ENCODE measurements at regions of chrX and their contacts with region 1.

Region 1: DNA sequence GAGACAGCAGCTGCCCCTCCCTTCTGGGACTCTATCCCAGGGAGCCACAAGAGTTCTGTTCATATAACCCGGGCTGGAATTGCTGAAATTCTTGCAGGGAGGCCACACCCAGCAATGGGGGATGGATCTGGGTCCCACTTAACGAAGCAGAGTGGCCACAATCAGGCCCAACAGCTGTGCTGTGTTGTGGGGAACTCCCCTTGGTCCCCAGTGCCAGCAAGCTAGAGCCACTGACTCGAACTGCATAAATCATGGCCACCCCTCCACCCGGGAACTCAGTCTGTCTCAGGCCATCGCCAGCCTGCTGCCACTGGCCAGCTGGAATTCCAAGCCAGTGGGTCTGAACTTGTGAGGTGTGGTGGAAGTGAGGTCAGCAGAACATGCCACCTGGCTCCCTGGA is 111.1 kb downstream of the KLF8 start:
- DNase-seq: no peak
- ATAC-seq: no peak
- H3K4me3 ChIP-seq: no peak overlapping the region
- H3K4me3 Mint-ChIP-seq: peak overlapping the region in 5 of 10 donors; percentile 57 to 75 (median 67)
- H3K27ac ChIP-seq: peak overlapping the region; percentile 21
- H3K27ac Mint-ChIP-seq: peak overlapping the region in 4 of 9 donors; percentile 66 to 91 (median 83)
- H3K4me1 ChIP-seq: peaks cover 6 to 21% of the 10 kb centered on the region in 2 donors
- H3K4me1 Mint-ChIP-seq: peaks cover 29 to 63% (median 56%) of the 10 kb centered on the region in 7 donors
- H3K27me3 ChIP-seq: no peaks in the 10 kb centered on the region
- H3K27me3 Mint-ChIP-seq: no peaks in the 10 kb centered on the region

Region 2: GRCh38 chrX:56314334-56314733 is 28.9 kb before region 1 on chrX:
- CTCF ChIA-PET with region 1: no interaction called
- POLR2A ChIA-PET with region 1: no interaction called
- intact Hi-C with region 1: loop called in 1 of 2 experiments (anchors 1 kb)
- DNase-seq: peak in 5 of 9 donors; percentile 0 to 32 (median 11)
- ATAC-seq: no peak
- H3K4me3 ChIP-seq: no peak overlapping the region
- H3K4me3 Mint-ChIP-seq: peak overlapping the region in 8 of 10 donors; percentile 46 to 79 (median 68)
- H3K27ac ChIP-seq: no peak overlapping the region
- H3K27ac Mint-ChIP-seq: peak overlapping the region in 7 of 9 donors; percentile 5 to 88 (median 59)
- H3K4me1 ChIP-seq: no peaks in the 10 kb centered on the region
- H3K4me1 Mint-ChIP-seq: peaks cover 0 to 15% (median 11%) of the 10 kb centered on the region in 7 donors
- H3K27me3 ChIP-seq: no peaks in the 10 kb centered on the region
- H3K27me3 Mint-ChIP-seq: no peaks in the 10 kb centered on the region

Region 3: DNA sequence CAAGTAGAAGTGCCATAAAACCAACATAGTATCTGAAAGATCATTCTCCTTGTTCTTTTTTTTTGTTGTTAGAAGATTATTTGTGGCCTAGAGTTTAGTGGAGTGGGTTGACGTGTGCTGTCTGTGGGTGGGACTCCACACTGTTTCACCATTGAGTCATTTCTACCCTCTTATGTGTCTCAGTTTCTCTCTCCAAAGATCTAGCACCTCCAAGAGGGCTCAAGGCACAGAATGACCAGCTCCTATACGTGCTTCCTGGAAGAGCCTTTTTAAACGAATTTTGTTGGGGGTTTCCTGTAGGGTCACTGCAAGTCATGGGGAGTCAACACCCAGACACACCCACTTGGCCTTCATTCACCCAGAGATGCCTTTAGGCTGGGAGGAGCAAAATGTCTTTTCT is 39.1 kb after region 1 on chrX:
- CTCF ChIA-PET with region 1: no interaction called
- POLR2A ChIA-PET with region 1: no interaction called
- intact Hi-C with region 1: no loop called
- DNase-seq: peak in 1 of 9 donors; percentile 24
- ATAC-seq: no peak
- H3K4me3 ChIP-seq: no peak overlapping the region
- H3K4me3 Mint-ChIP-seq: peak overlapping the region in 6 of 10 donors; percentile 7 to 78 (median 44)
- H3K27ac ChIP-seq: no peak overlapping the region
- H3K27ac Mint-ChIP-seq: peak overlapping the region in 8 of 9 donors; percentile 29 to 92 (median 80)
- H3K4me1 ChIP-seq: peaks cover 0 to 23% of the 10 kb centered on the region in 2 donors
- H3K4me1 Mint-ChIP-seq: peaks cover 18 to 53% (median 38%) of the 10 kb centered on the region in 7 donors
- H3K27me3 ChIP-seq: no peaks in the 10 kb centered on the region
- H3K27me3 Mint-ChIP-seq: no peaks in the 10 kb centered on the region

Region 4: GRCh38 chrX:56397636-56398035 is 54.4 kb after region 1 on chrX:
- CTCF ChIA-PET with region 1: no interaction called
- POLR2A ChIA-PET with region 1: no interaction called
- intact Hi-C with region 1: loop called in 1 of 2 experiments (anchors 10 kb)
- DNase-seq: peak in 5 of 9 donors; percentile 12 to 47 (median 25)
- ATAC-seq: peak; percentile 53
- H3K4me3 ChIP-seq: no peak overlapping the region
- H3K4me3 Mint-ChIP-seq: peak overlapping the region; percentile 10 to 77 (median 66)
- H3K27ac ChIP-seq: no peak overlapping the region
- H3K27ac Mint-ChIP-seq: peak overlapping the region; percentile 38 to 85 (median 76)
- H3K4me1 ChIP-seq: peaks cover 0 to 11% of the 10 kb centered on the region in 2 donors
- H3K4me1 Mint-ChIP-seq: peaks cover 9 to 68% (median 57%) of the 10 kb centered on the region in 7 donors
- H3K27me3 ChIP-seq: no peaks in the 10 kb centered on the region
- H3K27me3 Mint-ChIP-seq: no peaks in the 10 kb centered on the region

Measured in naive thymus-derived CD4-positive, alpha-beta T cell (primary cell).